ENCODE measurements at regions of chr11 and their contacts with region 1.

Region 1: DNA sequence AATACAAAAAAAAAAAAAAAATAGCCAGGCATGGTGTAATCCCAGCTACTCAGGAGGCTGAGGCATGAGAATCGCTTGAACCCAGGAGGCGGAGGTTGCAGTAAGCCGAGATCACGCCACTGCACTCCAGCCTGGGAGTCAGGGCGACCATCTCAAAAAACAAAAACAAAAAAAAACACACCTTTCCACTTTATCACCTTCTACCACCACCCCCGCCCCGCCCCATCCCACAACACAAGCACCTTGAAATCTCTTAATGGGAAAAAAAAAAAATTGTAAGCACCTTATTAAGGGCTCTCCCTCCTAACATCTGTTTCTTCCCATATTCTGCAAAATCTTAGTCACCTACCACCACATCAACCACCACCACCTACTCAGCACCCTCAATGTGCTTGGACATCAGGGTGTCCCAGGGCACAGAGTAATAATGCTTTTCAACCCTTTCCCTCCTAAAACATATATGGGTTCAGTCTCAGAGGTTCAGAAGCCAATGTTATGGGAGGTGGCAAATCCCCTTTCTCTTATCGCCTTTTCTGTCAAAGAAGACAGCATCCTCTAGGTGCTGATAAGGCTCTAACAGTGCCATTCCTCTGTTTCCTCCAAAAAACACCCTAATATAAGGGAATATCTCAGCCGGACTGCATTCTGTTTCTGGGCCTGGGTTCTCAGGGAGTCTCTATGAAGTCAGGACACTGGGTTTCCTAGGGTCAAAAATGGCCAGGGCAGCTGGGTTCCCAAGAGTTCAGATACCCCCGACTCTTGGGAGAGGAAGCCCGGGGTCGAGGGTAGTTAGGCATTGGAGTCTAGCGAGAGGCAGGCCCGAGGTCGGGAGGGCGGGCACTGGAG is 718 bp downstream of the INTS5 start:
- DNase-seq: no peak
- ATAC-seq: no peak
- H3K4me3 ChIP-seq: peak overlapping the region; percentile 96 to 98
- H3K27ac ChIP-seq: peak overlapping the region; percentile 84
- H3K4me1 ChIP-seq: peaks cover 7 to 24% of the 10 kb centered on the region in 2 experiments
- H3K27me3 ChIP-seq: no peaks in the 10 kb centered on the region
- CTCF ChIP-seq: no peak
- POLR2A ChIP-seq: no peak
- RAD21 ChIP-seq: no peak

Region 2: GRCh38 chr11:62536301-62536957 is 116.0 kb before region 1 on chr11:
- CTCF ChIA-PET with region 1: no interaction called
- POLR2A ChIA-PET with region 1: no interaction called
- RAD21 ChIA-PET with region 1: no interaction called
- intact Hi-C with region 1: no loop called
- DNase-seq: no peak
- ATAC-seq: no peak
- H3K4me3 ChIP-seq: no peak overlapping the region
- H3K27ac ChIP-seq: no peak overlapping the region
- H3K4me1 ChIP-seq: peaks cover 34 to 37% of the 10 kb centered on the region in 2 experiments
- H3K27me3 ChIP-seq: no peaks in the 10 kb centered on the region
- CTCF ChIP-seq: no peak
- POLR2A ChIP-seq: no peak
- RAD21 ChIP-seq: no peak

Region 3: GRCh38 chr11:62621567-62622470 is 30.6 kb before region 1 on chr11 and contains the start of gene B3GAT3:
- CTCF ChIA-PET with region 1: no interaction called
- POLR2A ChIA-PET with region 1: interaction called, 14 read pairs
- RAD21 ChIA-PET with region 1: no interaction called
- intact Hi-C with region 1: no loop called
- DNase-seq: peak; percentile 99
- ATAC-seq: peak; percentile 96
- H3K4me3 ChIP-seq: peak within 1 kb of the TSS; percentile 96 to 98
- H3K27ac ChIP-seq: peak within 1 kb of the TSS; percentile 75
- H3K4me1 ChIP-seq: peaks cover 12 to 20% of the 10 kb centered on the region in 2 experiments
- H3K27me3 ChIP-seq: no peaks in the 10 kb centered on the region
- CTCF ChIP-seq: no peak
- POLR2A ChIP-seq: peak; percentile 55
- RAD21 ChIP-seq: no peak
- total RNA-seq, gene B3GAT3: 51.2 TPM

Region 4: DNA sequence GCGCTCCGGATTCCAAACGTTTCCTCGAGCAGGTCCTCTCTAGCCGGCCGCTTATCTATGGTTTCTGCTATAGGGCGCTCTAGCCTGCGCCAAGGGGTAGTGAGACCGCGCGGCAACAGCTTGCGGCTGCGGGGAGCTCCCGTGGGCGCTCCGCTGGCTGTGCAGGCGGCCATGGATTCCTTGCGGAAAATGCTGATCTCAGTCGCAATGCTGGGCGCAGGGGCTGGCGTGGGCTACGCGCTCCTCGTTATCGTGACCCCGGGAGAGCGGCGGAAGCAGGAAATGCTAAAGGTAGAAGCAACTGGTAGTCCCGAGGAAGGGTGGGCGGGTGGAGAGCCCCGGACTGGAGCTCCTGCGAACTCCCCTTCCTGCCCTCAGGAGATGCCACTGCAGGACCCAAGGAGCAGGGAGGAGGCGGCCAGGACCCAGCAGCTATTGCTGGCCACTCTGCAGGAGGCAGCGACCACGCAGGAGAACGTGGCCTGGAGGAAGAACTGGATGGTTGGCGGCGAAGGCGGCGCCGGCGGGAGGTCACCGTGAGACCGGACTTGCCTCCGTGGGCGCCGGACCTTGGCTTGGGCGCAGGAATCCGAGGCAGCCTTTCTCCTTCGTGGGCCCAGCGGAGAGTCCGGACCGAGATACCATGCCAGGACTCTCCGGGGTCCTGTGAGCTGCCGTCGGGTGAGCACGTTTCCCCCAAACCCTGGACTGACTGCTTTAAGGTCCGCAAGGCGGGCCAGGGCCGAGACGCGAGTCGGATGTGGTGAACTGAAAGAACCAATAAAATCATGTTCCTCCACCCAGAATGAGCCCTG is 19.4 kb after region 1 on chr11 and contains the starts of genes LBHD1 and UQCC3:
- CTCF ChIA-PET with region 1: no interaction called
- POLR2A ChIA-PET with region 1: interaction called, 195 read pairs
- RAD21 ChIA-PET with region 1: no interaction called
- intact Hi-C with region 1: no loop called
- DNase-seq: peak; percentile 79
- ATAC-seq: peak; percentile 62
- H3K4me3 ChIP-seq: peak within 1 kb of the TSS; percentile 96 to 97
- H3K27ac ChIP-seq: peak within 1 kb of the TSS; percentile 98
- H3K4me1 ChIP-seq: peaks cover 35 to 59% of the 10 kb centered on the region in 2 experiments
- H3K27me3 ChIP-seq: no peaks in the 10 kb centered on the region
- CTCF ChIP-seq: no peak
- POLR2A ChIP-seq: peak; percentile 63
- RAD21 ChIP-seq: no peak
- total RNA-seq, gene LBHD1: 14.7 TPM
- total RNA-seq, gene UQCC3: 17.9 TPM